Activated CD4-positive, alpha-beta T cell treated with anti-CD3 and anti-CD28 coated beads for 36 hours (primary cell): ENCODE measurements at regions of chr1 and their contacts with region 1.

Region 1: GRCh38 chr1:52033190-52034049 is at the start of gene KTI12:
- DNase-seq: peak; percentile 93
- ATAC-seq: peak; percentile 94
- H3K4me3 Mint-ChIP-seq: peak within 1 kb of the TSS; percentile 91
- H3K27ac Mint-ChIP-seq: peak within 1 kb of the TSS; percentile 93
- H3K4me1 Mint-ChIP-seq: peaks cover 32% of the 10 kb centered on the region
- H3K27me3 Mint-ChIP-seq: no peaks in the 10 kb centered on the region
- total RNA-seq, gene KTI12: 7.6 to 12.3 TPM

Region 2: DNA sequence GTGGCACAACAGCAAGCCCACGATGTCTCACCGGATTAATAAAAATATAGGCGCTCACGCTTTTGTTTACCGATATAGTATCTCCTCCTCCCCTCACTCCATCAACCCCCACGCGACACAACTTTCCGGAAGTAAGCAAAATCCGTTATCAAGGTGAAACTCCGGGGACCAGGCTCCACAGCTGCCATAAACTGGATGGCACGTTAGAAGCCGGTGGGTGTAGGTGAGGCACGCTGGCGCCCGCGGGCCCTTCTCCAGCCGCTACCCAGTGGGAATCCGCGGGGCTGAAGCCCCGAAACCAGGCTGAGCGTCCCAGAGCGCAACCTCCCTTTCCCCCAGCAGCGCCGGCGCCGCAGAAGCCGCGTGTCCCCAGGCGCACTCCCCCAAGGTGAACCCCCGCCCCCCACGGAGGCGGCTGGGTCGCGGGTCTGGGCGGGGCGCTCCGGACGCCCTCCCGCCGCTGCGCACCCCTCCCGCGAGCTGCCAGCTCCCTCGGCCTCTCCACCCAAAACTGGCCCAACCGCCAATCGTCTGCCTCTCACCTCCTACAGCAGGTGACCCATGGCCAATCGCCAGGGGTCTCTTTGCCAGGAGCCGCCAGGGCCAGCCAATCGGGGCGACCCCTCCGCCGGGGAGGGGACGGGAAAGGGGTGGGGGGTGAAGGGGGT is 304.1 kb before region 1 on chr1:
- CTCF ChIA-PET with region 1: no interaction called
- POLR2A ChIA-PET with region 1: no interaction called
- intact Hi-C with region 1: loop called in 1 of 2 experiments (anchors 1 kb)
- DNase-seq: peak; percentile 97
- ATAC-seq: peak; percentile 97
- H3K4me3 Mint-ChIP-seq: peak overlapping the region; percentile 84
- H3K27ac Mint-ChIP-seq: peak overlapping the region; percentile 83
- H3K4me1 Mint-ChIP-seq: peaks cover 40% of the 10 kb centered on the region
- H3K27me3 Mint-ChIP-seq: no peaks in the 10 kb centered on the region

Region 3: DNA sequence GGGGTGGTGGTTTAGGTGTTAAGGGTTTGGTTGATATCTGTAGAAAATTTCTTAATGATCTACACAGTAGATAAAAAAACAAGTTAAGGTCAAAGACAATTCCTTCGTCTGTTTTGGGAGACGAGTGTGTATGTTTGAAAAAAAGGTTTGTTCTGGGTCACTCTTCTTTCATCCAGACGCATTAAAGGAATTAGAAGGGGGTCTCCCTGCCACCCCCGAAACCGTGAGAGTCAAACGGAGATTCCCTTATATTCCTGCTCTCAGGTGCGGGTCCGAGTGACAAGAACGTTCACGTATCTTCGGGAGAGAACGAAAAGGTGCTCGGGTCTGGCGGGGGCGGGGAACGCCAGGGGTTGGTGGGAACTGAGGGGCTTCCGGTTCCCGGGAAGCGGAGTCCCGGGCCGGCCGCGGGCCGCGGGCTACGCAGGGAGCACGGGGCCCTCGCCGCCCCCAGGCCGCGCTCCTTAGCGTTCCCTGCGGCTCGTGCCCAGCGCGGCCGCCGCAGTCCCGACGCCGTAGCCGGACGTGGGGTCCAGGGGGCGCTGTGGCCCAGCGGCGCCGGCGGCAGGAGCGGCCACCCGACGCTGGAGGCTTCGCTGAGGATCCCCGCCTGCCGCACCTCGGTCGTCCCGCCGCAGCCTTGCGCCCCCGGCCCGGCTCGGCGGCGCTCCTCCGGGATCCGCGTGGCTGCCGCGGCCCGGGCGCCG is 108.2 kb after region 1 on chr1 and contains the start of gene ZFYVE9:
- CTCF ChIA-PET with region 1: no interaction called
- POLR2A ChIA-PET with region 1: no interaction called
- intact Hi-C with region 1: loop called in 1 of 2 experiments (anchors 1 kb)
- DNase-seq: peak; percentile 83
- ATAC-seq: peak; percentile 62
- H3K4me3 Mint-ChIP-seq: peak within 1 kb of the TSS; percentile 80
- H3K27ac Mint-ChIP-seq: peak within 1 kb of the TSS; percentile 84
- H3K4me1 Mint-ChIP-seq: peaks cover 43% of the 10 kb centered on the region
- H3K27me3 Mint-ChIP-seq: peaks cover 9% of the 10 kb centered on the region
- total RNA-seq, gene ZFYVE9: 4.3 to 4.7 TPM

Region 4: DNA sequence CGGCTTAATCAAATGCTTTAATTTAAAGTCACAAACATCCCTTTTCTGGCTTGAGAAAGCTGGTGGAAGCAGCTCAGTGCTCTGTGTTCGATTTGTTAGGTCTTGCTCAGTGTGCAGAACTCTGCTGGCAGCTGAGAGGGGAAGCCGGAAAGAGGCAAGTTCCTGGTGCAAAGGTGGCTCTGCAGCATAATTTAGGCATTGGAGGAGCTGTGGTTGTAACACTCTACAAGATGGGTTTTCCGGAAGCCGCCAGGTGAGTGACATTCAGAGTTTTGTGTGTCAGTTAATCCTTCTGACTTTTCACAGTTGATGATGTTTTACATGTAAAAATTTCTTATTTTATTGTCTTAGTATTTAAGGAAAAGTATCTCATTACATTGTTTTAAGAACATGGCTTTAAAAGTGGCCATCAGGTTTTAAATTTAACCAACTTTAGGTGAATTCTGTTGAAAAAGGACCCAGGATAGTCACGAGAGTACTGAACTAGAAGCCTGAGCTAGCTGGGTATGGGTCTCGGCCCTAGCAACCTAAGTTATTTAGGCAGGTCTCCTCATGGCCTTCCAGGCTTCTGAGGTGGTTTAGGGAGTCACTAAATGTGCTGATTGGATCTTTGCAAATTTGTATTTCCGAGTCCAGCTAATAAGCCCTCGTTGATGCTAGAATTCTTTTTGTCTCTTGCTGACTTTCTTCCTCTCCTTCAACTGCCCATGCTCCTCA is 981.5 kb after region 1 on chr1:
- CTCF ChIA-PET with region 1: no interaction called
- POLR2A ChIA-PET with region 1: no interaction called
- intact Hi-C with region 1: loop called in 1 of 2 experiments (anchors 10 kb)
- DNase-seq: peak; percentile 84
- ATAC-seq: peak; percentile 99
- H3K4me3 Mint-ChIP-seq: peak overlapping the region; percentile 79
- H3K27ac Mint-ChIP-seq: peak overlapping the region; percentile 89
- H3K4me1 Mint-ChIP-seq: peaks cover 24% of the 10 kb centered on the region
- H3K27me3 Mint-ChIP-seq: no peaks in the 10 kb centered on the region

Region 5: GRCh38 chr1:53110370-53111072 is 1077.1 kb after region 1 on chr1:
- CTCF ChIA-PET with region 1: no interaction called
- POLR2A ChIA-PET with region 1: no interaction called
- intact Hi-C with region 1: no loop called
- DNase-seq: peak; percentile 66
- ATAC-seq: peak; percentile 87
- H3K4me3 Mint-ChIP-seq: no peak overlapping the region
- H3K27ac Mint-ChIP-seq: peak overlapping the region; percentile 59
- H3K4me1 Mint-ChIP-seq: peaks cover 29% of the 10 kb centered on the region
- H3K27me3 Mint-ChIP-seq: peaks cover 5% of the 10 kb centered on the region